ENCODE measurements at regions of chr9 and their contacts with region 1.

Region 1: DNA sequence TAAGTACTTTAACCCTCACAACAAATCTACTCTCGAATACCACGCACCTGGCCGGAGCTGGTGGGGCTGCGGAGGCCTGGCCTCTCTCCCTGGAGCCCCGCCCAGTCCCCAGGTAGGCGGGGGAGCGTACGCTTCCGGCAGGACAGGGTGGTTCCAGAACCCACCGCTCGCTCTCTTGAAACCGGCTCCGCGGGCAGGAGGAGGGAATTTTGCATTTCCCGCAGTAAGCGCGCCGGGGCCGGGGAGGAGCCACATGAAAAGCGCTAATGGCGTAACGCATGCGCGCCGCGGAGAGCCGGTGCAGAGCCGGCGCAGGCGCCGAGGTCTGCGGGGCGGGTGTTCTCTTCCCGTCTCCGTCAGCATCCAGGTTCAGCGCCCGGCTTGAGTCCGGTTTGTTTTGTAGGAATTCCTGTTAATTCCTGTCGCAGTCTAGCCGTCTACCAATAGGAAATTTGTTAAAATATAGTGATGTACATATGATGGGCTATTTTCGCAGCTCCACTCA is 20.8 kb downstream of the CAVIN4 start:
- DNase-seq: peak; percentile 77 to 83 (median 81)
- H3K4me3 ChIP-seq: peak overlapping the region in 1 of 2 donors; percentile 59
- H3K4me3 Mint-ChIP-seq: peak overlapping the region; percentile 72 to 88 (median 86)
- H3K27ac ChIP-seq: peak overlapping the region; percentile 49
- H3K27ac Mint-ChIP-seq: peak overlapping the region; percentile 16 to 93 (median 58)
- H3K4me1 ChIP-seq: peaks cover 15% of the 10 kb centered on the region
- H3K4me1 Mint-ChIP-seq: peaks cover 14 to 34% (median 27%) of the 10 kb centered on the region in 4 donors
- H3K27me3 ChIP-seq: no peaks in the 10 kb centered on the region
- H3K27me3 Mint-ChIP-seq: peaks cover 0 to 3% of the 10 kb centered on the region in 2 donors

Region 2: GRCh38 chr9:99906403-99907207 is 692.1 kb before region 1 on chr9 and contains the start of gene STX17:
- CTCF ChIA-PET with region 1: no interaction called
- POLR2A ChIA-PET with region 1: no interaction called
- intact Hi-C with region 1: loop called (anchors 5 kb)
- DNase-seq: peak; percentile 85 to 92 (median 88)
- H3K4me3 ChIP-seq: peak within 1 kb of the TSS; percentile 26 to 90
- H3K4me3 Mint-ChIP-seq: peak within 1 kb of the TSS; percentile 96 to 100 (median 98)
- H3K27ac ChIP-seq: peak within 1 kb of the TSS; percentile 96
- H3K27ac Mint-ChIP-seq: peak within 1 kb of the TSS; percentile 99 to 100 (median 99)
- H3K4me1 ChIP-seq: peaks cover 26% of the 10 kb centered on the region
- H3K4me1 Mint-ChIP-seq: peaks cover 26 to 44% (median 34%) of the 10 kb centered on the region in 4 donors
- H3K27me3 ChIP-seq: no peaks in the 10 kb centered on the region
- H3K27me3 Mint-ChIP-seq: no peaks in the 10 kb centered on the region
- total RNA-seq, gene STX17: 52.2 to 61.5 TPM

Region 3: GRCh38 chr9:100322954-100323536 is 275.6 kb before region 1 on chr9:
- CTCF ChIA-PET with region 1: interaction called, 3 read pairs
- POLR2A ChIA-PET with region 1: no interaction called
- intact Hi-C with region 1: loop called (anchors 10 kb)
- DNase-seq: peak in 4 of 5 donors; percentile 8 to 26 (median 11)
- H3K4me3 ChIP-seq: no peak overlapping the region
- H3K4me3 Mint-ChIP-seq: no peak overlapping the region
- H3K27ac ChIP-seq: no peak overlapping the region
- H3K27ac Mint-ChIP-seq: peak overlapping the region in 3 of 7 donors; percentile 18 to 31 (median 19)
- H3K4me1 ChIP-seq: peaks cover 3% of the 10 kb centered on the region
- H3K4me1 Mint-ChIP-seq: peaks cover 12 to 13% (median 13%) of the 10 kb centered on the region in 4 donors
- H3K27me3 ChIP-seq: no peaks in the 10 kb centered on the region
- H3K27me3 Mint-ChIP-seq: no peaks in the 10 kb centered on the region

Region 4: DNA sequence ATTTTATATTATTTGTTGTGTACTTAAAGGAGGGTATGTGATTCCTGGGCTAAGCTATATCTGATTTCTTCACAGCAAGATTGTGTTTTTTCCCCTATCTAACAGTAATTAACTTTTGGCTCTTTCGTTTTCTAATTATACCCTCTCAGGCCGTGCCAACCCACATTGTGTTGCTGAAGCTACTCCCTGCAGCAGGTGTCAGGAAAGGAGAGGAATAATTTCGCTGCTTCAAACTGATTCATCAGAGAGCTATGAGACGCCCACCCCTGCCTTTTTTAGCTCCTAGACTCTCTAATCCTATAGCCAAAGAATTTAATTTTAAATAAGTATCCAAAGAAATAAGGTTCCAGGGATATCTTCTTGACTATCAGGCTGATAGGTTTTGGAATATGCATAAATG is 17.0 kb before region 1 on chr9:
- CTCF ChIA-PET with region 1: interaction called, 16 read pairs
- POLR2A ChIA-PET with region 1: no interaction called
- intact Hi-C with region 1: no loop called
- DNase-seq: no peak
- H3K4me3 ChIP-seq: no peak overlapping the region
- H3K4me3 Mint-ChIP-seq: no peak overlapping the region
- H3K27ac ChIP-seq: no peak overlapping the region
- H3K27ac Mint-ChIP-seq: no peak overlapping the region
- H3K4me1 ChIP-seq: no peaks in the 10 kb centered on the region
- H3K4me1 Mint-ChIP-seq: no peaks in the 10 kb centered on the region
- H3K27me3 ChIP-seq: no peaks in the 10 kb centered on the region
- H3K27me3 Mint-ChIP-seq: no peaks in the 10 kb centered on the region

Region 5: DNA sequence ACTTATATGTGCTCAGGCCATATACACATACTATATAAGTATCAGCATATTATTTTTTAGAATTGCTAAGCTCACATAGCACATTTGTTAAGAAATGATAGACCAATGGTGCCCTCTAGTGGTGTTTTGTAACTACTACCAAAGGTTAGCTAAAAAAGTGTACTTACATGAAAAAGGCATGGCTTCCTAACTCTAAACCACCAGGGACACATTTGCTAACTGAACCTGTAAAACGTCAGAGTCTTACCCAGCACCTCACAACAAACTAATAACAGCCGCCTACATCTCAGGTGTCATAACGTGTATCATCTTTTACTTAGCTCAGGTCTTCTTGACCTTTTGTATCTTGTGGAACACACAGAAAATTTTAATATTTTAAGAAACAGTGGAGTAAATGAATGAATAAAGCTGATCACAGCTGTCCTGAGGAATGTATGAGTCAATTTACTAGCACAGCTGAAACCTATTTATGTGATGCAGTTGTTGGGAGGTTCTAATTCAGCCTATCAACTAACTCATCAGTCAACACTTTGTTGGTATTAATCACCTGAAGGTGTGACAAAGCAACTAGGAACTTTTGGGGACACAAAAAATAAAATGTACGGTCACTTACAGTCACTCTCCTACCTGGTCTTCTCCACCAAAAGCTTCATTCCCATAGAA is 713.2 kb after region 1 on chr9:
- CTCF ChIA-PET with region 1: interaction called, 10 read pairs
- POLR2A ChIA-PET with region 1: no interaction called
- intact Hi-C with region 1: no loop called
- DNase-seq: peak in 4 of 5 donors; percentile 45 to 52 (median 52)
- H3K4me3 ChIP-seq: no peak overlapping the region
- H3K4me3 Mint-ChIP-seq: no peak overlapping the region
- H3K27ac ChIP-seq: no peak overlapping the region
- H3K27ac Mint-ChIP-seq: no peak overlapping the region
- H3K4me1 ChIP-seq: no peaks in the 10 kb centered on the region
- H3K4me1 Mint-ChIP-seq: no peaks in the 10 kb centered on the region
- H3K27me3 ChIP-seq: no peaks in the 10 kb centered on the region
- H3K27me3 Mint-ChIP-seq: peaks cover 0 to 6% of the 10 kb centered on the region in 2 donors